ENCODE measurements at regions of chr22 and their contacts with region 1.

Region 1: GRCh38 chr22:41403532-41404318 is 22.0 kb downstream of the TEF start:
- DNase-seq: peak; percentile 89
- ATAC-seq: peak; percentile 87
- H3K4me3 ChIP-seq: no peak overlapping the region
- H3K4me3 Mint-ChIP-seq: no peak overlapping the region
- H3K27ac ChIP-seq: no peak overlapping the region
- H3K27ac Mint-ChIP-seq: peak overlapping the region; percentile 15
- H3K4me1 ChIP-seq: peaks cover 8 to 30% of the 10 kb centered on the region in 2 donors
- H3K4me1 Mint-ChIP-seq: peaks cover 31% of the 10 kb centered on the region
- H3K27me3 ChIP-seq: no peaks in the 10 kb centered on the region
- H3K27me3 Mint-ChIP-seq: no peaks in the 10 kb centered on the region
- CTCF ChIP-seq: peak; percentile 94

Region 2: DNA sequence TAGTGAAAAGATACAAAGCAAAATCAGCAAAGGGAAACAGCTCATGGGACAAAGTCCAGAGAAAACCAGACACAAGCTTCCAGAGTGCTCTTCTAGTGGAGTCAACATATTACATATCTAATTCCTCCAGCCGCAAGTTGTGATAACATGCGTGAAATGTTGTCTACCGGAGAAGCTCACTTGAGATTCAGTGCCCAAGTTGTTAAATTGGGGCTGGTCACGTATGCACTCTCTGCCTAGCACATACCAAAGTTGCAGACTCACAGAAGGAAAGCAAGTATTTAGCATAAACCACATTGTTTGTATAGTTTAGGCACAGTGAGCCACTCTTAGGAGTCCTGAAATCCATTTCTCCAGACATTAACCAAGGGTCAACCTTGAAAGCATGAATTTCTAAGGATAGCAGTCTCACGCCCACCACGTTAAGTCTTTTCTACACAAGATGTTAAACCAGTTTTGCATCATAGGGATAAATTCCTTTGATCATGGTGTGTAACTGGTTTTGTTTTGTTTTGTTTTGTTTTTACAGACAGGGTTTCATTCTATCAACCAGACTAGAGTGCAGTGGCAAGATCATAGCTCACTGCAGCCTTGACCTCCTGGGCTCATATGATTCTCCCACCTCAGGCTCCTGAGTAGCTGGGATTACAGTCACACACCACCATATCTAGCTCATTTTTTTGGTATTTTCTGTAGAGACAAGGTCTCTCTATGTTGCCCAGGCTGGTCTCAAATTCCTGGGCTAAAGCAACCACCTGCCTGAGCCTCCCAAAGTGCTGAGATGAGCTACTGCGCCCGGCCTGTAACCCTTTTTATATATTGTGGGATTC is 350.8 kb before region 1 on chr22:
- CTCF ChIA-PET with region 1: no interaction called
- POLR2A ChIA-PET with region 1: no interaction called
- intact Hi-C with region 1: no loop called
- DNase-seq: no peak
- ATAC-seq: no peak
- H3K4me3 ChIP-seq: no peak overlapping the region
- H3K4me3 Mint-ChIP-seq: no peak overlapping the region
- H3K27ac ChIP-seq: no peak overlapping the region
- H3K27ac Mint-ChIP-seq: no peak overlapping the region
- H3K4me1 ChIP-seq: no peaks in the 10 kb centered on the region
- H3K4me1 Mint-ChIP-seq: no peaks in the 10 kb centered on the region
- H3K27me3 ChIP-seq: no peaks in the 10 kb centered on the region
- H3K27me3 Mint-ChIP-seq: no peaks in the 10 kb centered on the region
- CTCF ChIP-seq: no peak

Region 3: GRCh38 chr22:41352051-41352450 is 51.7 kb before region 1 on chr22:
- CTCF ChIA-PET with region 1: no interaction called
- POLR2A ChIA-PET with region 1: no interaction called
- intact Hi-C with region 1: no loop called
- DNase-seq: no peak
- ATAC-seq: no peak
- H3K4me3 ChIP-seq: no peak overlapping the region
- H3K4me3 Mint-ChIP-seq: no peak overlapping the region
- H3K27ac ChIP-seq: no peak overlapping the region
- H3K27ac Mint-ChIP-seq: no peak overlapping the region
- H3K4me1 ChIP-seq: no peaks in the 10 kb centered on the region
- H3K4me1 Mint-ChIP-seq: no peaks in the 10 kb centered on the region
- H3K27me3 ChIP-seq: no peaks in the 10 kb centered on the region
- H3K27me3 Mint-ChIP-seq: no peaks in the 10 kb centered on the region
- CTCF ChIP-seq: no peak

Region 4: GRCh38 chr22:41468381-41469217 is 64.9 kb after region 1 on chr22 and contains the starts of genes ACO2 and PHF5A:
- CTCF ChIA-PET with region 1: interaction called, 36 read pairs
- POLR2A ChIA-PET with region 1: interaction called, 5 read pairs
- intact Hi-C with region 1: no loop called
- DNase-seq: peak; percentile 99
- ATAC-seq: peak; percentile 91
- H3K4me3 ChIP-seq: peak within 1 kb of the TSS; percentile 71 to 98 (median 86)
- H3K4me3 Mint-ChIP-seq: peak within 1 kb of the TSS; percentile 89
- H3K27ac ChIP-seq: peak within 1 kb of the TSS; percentile 99
- H3K27ac Mint-ChIP-seq: peak within 1 kb of the TSS; percentile 98
- H3K4me1 ChIP-seq: peaks cover 20 to 31% of the 10 kb centered on the region in 2 donors
- H3K4me1 Mint-ChIP-seq: peaks cover 59% of the 10 kb centered on the region
- H3K27me3 ChIP-seq: no peaks in the 10 kb centered on the region
- H3K27me3 Mint-ChIP-seq: no peaks in the 10 kb centered on the region
- CTCF ChIP-seq: no peak
- total RNA-seq, gene ACO2: 91.7 and 104 TPM in 2 replicates
- total RNA-seq, gene PHF5A: 31.6 and 34.5 TPM in 2 replicates

Region 5: DNA sequence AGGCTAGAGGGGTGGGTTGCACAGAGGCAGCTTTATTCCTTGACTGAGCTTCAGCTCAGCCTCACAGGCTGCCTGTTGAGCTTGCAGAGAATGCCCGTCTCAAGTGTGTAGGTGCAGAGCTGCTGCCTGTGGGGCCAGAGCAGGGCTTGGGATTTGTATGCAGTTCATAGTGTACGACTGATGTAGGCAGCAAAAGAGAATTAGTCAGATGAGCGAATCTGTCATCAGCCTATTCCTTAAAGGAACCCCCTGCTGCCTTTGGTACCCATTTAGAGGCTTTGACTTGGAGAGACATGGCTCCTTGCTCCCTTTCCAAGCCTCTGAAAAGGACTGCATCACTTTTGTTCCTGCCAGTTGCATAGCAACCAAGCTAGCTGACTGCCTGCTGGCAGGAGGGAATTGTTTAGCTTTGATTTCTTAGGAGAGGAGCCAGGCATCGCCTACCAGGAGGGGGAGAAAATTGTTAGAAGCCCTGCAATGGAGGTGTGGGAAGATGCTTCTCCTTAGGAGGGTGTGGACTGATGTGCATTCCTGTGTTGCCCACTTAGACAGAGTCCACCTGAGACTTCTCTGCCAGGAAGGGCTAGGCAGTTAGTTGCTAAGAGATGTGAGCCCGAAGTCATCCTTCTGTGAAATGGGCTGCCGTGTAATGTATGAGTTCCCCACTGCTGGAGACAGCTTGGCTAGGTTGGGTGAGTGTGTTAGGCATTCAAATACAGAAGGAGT is 76.1 kb after region 1 on chr22:
- CTCF ChIA-PET with region 1: interaction called, 32 read pairs
- POLR2A ChIA-PET with region 1: interaction called, 3 read pairs
- intact Hi-C with region 1: no loop called
- DNase-seq: no peak
- ATAC-seq: no peak
- H3K4me3 ChIP-seq: peak overlapping the region in 4 of 5 experiments; percentile 0 to 25 (median 12)
- H3K4me3 Mint-ChIP-seq: peak overlapping the region; percentile 76
- H3K27ac ChIP-seq: peak overlapping the region; percentile 82 to 86
- H3K27ac Mint-ChIP-seq: peak overlapping the region; percentile 95
- H3K4me1 ChIP-seq: peaks cover 84 to 95% of the 10 kb centered on the region in 2 donors
- H3K4me1 Mint-ChIP-seq: peaks cover 77% of the 10 kb centered on the region
- H3K27me3 ChIP-seq: no peaks in the 10 kb centered on the region
- H3K27me3 Mint-ChIP-seq: no peaks in the 10 kb centered on the region
- CTCF ChIP-seq: no peak

Region 6: DNA sequence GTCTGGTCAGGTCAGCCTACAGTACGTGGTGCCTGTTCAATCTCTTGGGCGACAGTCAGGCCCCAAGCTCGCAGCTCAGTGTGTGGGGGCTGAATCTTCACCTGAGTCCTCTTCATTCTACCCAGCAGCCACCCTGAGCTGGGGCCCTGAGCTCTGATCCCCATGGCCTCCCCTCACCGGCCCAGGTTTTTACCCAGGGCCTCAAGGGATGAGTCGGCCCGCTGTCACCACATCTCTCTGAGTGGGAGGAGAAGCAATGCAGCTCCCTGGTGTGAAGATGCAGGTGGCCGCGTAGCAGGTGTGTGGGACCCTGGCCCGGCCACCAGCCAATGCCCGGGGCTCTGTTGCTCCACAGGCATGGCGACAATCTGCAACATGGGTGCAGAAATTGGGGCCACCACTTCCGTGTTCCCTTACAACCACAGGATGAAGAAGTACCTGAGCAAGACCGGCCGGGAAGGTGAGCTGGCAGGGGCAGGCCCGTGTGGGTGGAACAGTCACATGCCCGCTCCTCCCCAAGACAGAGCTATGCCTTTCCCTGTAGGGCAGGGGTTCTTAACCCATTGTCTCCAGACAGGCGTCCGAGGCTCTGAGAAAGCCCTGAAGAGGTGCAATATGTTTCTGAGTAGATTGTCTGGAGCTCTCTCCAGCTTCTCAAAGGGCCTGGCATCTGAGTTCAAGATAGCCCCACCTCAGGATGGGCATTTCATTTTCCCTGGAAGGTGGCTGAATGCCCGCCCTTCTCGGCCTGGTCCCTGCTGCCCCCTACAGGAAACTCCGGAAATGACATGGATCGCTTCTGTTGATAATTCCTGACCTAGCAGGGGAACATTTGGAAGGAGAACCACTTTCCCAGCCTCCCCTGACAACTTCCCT is 113.7 kb after region 1 on chr22:
- CTCF ChIA-PET with region 1: interaction called, 228 read pairs
- POLR2A ChIA-PET with region 1: interaction called, 4 read pairs
- intact Hi-C with region 1: loop called (anchors 1 kb)
- DNase-seq: peak; percentile 60
- ATAC-seq: no peak
- H3K4me3 ChIP-seq: no peak overlapping the region
- H3K4me3 Mint-ChIP-seq: no peak overlapping the region
- H3K27ac ChIP-seq: no peak overlapping the region
- H3K27ac Mint-ChIP-seq: peak overlapping the region; percentile 37
- H3K4me1 ChIP-seq: no peaks in the 10 kb centered on the region
- H3K4me1 Mint-ChIP-seq: no peaks in the 10 kb centered on the region
- H3K27me3 ChIP-seq: no peaks in the 10 kb centered on the region
- H3K27me3 Mint-ChIP-seq: no peaks in the 10 kb centered on the region
- CTCF ChIP-seq: peak; percentile 71

Region 7: GRCh38 chr22:41526837-41527799 is 123.4 kb after region 1 on chr22:
- CTCF ChIA-PET with region 1: interaction called, 228 read pairs
- POLR2A ChIA-PET with region 1: interaction called, 7 read pairs
- intact Hi-C with region 1: loop called (anchors 1 kb)
- DNase-seq: peak; percentile 78
- ATAC-seq: peak; percentile 81
- H3K4me3 ChIP-seq: no peak overlapping the region
- H3K4me3 Mint-ChIP-seq: no peak overlapping the region
- H3K27ac ChIP-seq: no peak overlapping the region
- H3K27ac Mint-ChIP-seq: peak overlapping the region; percentile 74
- H3K4me1 ChIP-seq: peaks cover 7 to 12% of the 10 kb centered on the region in 2 donors
- H3K4me1 Mint-ChIP-seq: peaks cover 15% of the 10 kb centered on the region
- H3K27me3 ChIP-seq: no peaks in the 10 kb centered on the region
- H3K27me3 Mint-ChIP-seq: no peaks in the 10 kb centered on the region
- CTCF ChIP-seq: peak; percentile 90

Region 8: GRCh38 chr22:41532908-41533825 is 129.4 kb after region 1 on chr22:
- CTCF ChIA-PET with region 1: interaction called, 228 read pairs
- POLR2A ChIA-PET with region 1: interaction called, 8 read pairs
- intact Hi-C with region 1: no loop called
- DNase-seq: peak; percentile 73
- ATAC-seq: peak; percentile 72
- H3K4me3 ChIP-seq: no peak overlapping the region
- H3K4me3 Mint-ChIP-seq: no peak overlapping the region
- H3K27ac ChIP-seq: no peak overlapping the region
- H3K27ac Mint-ChIP-seq: no peak overlapping the region
- H3K4me1 ChIP-seq: no peaks in the 10 kb centered on the region
- H3K4me1 Mint-ChIP-seq: no peaks in the 10 kb centered on the region
- H3K27me3 ChIP-seq: no peaks in the 10 kb centered on the region
- H3K27me3 Mint-ChIP-seq: no peaks in the 10 kb centered on the region
- CTCF ChIP-seq: peak; percentile 74